HepG2 (cell line): ENCODE measurements at regions of chr10 and their contacts with region 1.

Region 1: GRCh38 chr10:126598003-126598402 is 72.5 kb downstream of the C10orf90 start:
- DNase-seq: peak; percentile 32
- ATAC-seq: peak; percentile 94
- H3K4me3 ChIP-seq: no peak overlapping the region
- H3K27ac ChIP-seq: no peak overlapping the region
- H3K4me1 ChIP-seq: no peaks in the 10 kb centered on the region
- H3K27me3 ChIP-seq: peaks cover 0 to 3% of the 10 kb centered on the region in 2 experiments; a peak in 1 of 5 replicates
- CTCF ChIP-seq: peak; percentile 66
- EP300 ChIP-seq: no peak
- POLR2A ChIP-seq: no peak
- RAD21 ChIP-seq: no peak

Region 2: DNA sequence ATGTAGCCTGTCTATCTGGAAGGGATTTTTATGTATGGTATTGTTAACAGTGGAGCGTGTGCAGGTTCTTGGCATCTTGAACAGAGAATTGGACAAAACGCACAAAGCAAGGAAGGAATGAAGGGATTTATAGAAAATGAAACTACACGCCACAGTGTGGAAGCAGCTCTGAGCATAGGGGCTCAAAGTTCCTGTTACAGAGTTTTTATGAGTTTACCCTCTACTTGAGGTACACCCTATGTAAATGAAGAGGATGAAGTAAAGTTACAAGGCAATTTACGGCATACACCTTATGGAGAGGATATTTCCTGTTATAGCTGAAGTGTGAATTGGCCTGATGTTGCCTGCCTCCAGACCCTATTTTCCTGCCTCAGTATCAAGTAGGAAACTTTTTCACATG is 668.4 kb before region 1 on chr10:
- CTCF ChIA-PET with region 1: no interaction called
- POLR2A ChIA-PET with region 1: no interaction called
- in situ Hi-C with region 1: no loop called
- intact Hi-C with region 1: loop called (anchors 5 kb)
- DNase-seq: no peak
- ATAC-seq: no peak
- H3K4me3 ChIP-seq: no peak overlapping the region
- H3K27ac ChIP-seq: no peak overlapping the region
- H3K4me1 ChIP-seq: no peaks in the 10 kb centered on the region
- H3K27me3 ChIP-seq: peaks cover 0 to 5% of the 10 kb centered on the region in 2 experiments; a peak in 1 of 5 replicates
- CTCF ChIP-seq: no peak
- EP300 ChIP-seq: no peak
- POLR2A ChIP-seq: no peak
- RAD21 ChIP-seq: no peak

Region 3: DNA sequence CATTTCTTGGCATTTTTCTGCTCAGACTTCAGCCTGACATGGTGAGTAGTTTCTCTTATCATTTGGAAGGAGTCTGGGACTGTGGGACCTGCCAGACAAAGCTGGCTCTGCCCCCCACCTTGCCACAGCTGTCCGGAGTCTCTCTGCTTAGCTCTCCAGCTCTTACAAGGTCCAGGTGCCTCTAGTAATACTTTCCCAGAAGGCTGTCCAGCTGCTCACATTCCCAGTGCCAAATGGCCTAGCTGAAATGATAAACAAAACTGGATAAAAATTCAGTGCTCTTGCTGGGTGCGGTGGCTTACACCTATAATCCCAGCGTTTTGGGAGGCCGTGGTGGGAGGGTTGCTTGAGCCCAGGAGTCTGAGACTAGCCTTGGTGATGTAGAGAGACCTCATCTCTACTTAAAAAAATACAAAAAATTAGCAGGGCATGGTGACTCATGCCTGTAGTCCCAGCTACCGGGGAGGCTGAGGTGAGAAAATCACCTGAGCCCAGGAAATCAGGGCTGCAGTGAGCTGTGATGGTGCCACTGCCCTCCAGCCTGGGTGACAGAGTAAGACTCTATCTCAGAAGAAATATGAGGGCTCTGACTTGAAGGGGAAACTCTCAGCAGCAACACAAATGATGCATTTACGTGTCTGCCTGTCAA is 14.3 kb before region 1 on chr10:
- CTCF ChIA-PET with region 1: no interaction called
- POLR2A ChIA-PET with region 1: no interaction called
- in situ Hi-C with region 1: no loop called
- intact Hi-C with region 1: no loop called
- DNase-seq: no peak
- ATAC-seq: no peak
- H3K4me3 ChIP-seq: no peak overlapping the region
- H3K27ac ChIP-seq: no peak overlapping the region
- H3K4me1 ChIP-seq: no peaks in the 10 kb centered on the region
- H3K27me3 ChIP-seq: peaks cover 0 to 9% of the 10 kb centered on the region in 2 experiments; a peak in 1 of 5 replicates
- CTCF ChIP-seq: no peak
- EP300 ChIP-seq: no peak
- POLR2A ChIP-seq: no peak
- RAD21 ChIP-seq: no peak